Dendritic cell treated with granulocyte-macrophage colony-stimulating factor and Interleukin-4, amounts not matched to agents 40 ng/mL and 50 ng/mL, for 4 days (primary cell): ENCODE measurements at regions of chr20 and their contacts with region 1.

Region 1: DNA sequence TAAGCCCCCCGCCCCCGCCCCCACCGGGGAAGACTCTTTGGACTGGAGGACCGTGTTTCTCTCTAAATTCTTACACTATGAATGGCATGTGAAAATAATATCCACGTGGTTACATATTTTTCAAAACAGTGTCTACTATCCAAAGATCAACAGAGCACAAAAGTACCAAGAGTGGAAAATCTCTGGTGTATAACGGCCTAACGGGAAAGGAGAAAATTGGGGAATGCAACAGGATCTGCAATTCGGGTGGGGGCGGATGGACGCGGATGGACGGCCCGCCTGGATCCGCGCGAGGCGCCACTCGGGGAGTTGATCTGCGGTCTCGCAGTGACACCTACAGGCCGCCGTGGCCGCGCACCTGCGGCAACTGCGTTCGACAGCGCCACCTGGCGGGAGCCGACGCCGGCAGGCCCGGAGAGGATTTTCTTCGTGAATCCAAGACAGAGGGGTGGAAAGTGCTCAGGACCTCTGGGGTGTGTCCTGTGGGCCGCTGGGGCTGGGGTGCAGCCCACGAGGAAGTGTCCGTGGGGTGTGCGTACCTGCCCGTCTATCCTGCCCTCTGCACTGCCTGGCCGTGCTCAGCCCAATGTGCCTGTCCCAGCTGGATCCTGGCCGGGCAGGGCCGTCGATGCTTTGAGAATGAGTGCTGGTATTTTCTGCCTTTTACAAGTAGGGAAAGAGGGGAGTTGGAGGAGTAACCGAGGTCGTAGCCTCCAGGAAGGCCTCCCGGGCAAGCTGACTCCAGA is 18.6 kb downstream of the ANKRD60 start:
- H3K4me3 Mint-ChIP-seq: no peak overlapping the region
- H3K27ac Mint-ChIP-seq: no peak overlapping the region
- H3K4me1 Mint-ChIP-seq: peaks cover 7% of the 10 kb centered on the region
- H3K27me3 Mint-ChIP-seq: peaks cover 26% of the 10 kb centered on the region

Region 2: DNA sequence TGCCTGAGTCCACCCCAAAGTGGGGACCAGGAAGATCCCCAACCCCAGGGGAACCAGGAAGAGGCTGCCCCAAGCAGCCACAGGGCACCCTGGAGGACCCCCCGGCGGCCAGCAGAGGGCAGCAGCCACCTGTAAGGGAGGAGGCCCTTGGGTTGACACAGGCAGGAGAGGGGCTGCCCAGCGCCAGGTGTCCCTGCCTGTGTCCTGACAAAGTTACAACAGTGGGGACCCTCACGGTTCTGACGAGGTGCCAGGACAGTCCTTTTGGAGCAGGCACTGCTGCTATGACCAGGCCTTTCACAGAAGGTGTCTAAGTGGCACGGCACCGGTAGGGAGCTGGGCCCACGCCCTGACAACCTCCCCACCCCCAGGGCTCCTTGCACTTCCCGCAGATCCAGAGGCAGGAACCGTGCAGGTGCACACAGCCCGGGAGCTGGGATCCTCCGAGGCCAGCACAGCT is 1120.1 kb before region 1 on chr20:
- intact Hi-C with region 1: loop called (anchors 10 kb)
- H3K4me3 Mint-ChIP-seq: no peak overlapping the region
- H3K27ac Mint-ChIP-seq: no peak overlapping the region
- H3K4me1 Mint-ChIP-seq: peaks cover 5% of the 10 kb centered on the region
- H3K27me3 Mint-ChIP-seq: peaks cover 13% of the 10 kb centered on the region

Region 3: GRCh38 chr20:57514273-57514751 is 695.5 kb before region 1 on chr20:
- intact Hi-C with region 1: loop called (anchors 5 kb)
- H3K4me3 Mint-ChIP-seq: no peak overlapping the region
- H3K27ac Mint-ChIP-seq: no peak overlapping the region
- H3K4me1 Mint-ChIP-seq: no peaks in the 10 kb centered on the region
- H3K27me3 Mint-ChIP-seq: peaks cover 37% of the 10 kb centered on the region

Region 4: GRCh38 chr20:58078741-58079522 is 130.9 kb before region 1 on chr20:
- intact Hi-C with region 1: no loop called
- H3K4me3 Mint-ChIP-seq: no peak overlapping the region
- H3K27ac Mint-ChIP-seq: no peak overlapping the region
- H3K4me1 Mint-ChIP-seq: peaks cover 12% of the 10 kb centered on the region
- H3K27me3 Mint-ChIP-seq: peaks cover 16% of the 10 kb centered on the region